Esophagus muscularis mucosa (tissue), 4 donors: ENCODE measurements at regions of chr18 and their contacts with region 1.

Region 1: GRCh38 chr18:54269893-54270844 is 852 bp downstream of the POLI start:
- DNase-seq: no peak
- H3K4me3 ChIP-seq: peak overlapping the region; percentile 72 to 83 (median 82)
- H3K27ac ChIP-seq: peak overlapping the region; percentile 87 to 91 (median 88)
- H3K4me1 ChIP-seq: peaks cover 7 to 22% (median 18%) of the 10 kb centered on the region in 4 donors
- H3K27me3 ChIP-seq: no peaks in the 10 kb centered on the region
- CTCF ChIP-seq: peak; percentile 26 to 45 (median 32)
- EP300 ChIP-seq: no peak
- POLR2A ChIP-seq: no peak

Region 2: GRCh38 chr18:54224379-54225014 is 45.7 kb before region 1 on chr18 and contains the start of gene MBD2:
- intact Hi-C with region 1: loop called (anchors 2 kb)
- DNase-seq: peak; percentile 97
- H3K4me3 ChIP-seq: peak within 1 kb of the TSS; percentile 77 to 92 (median 84)
- H3K27ac ChIP-seq: peak within 1 kb of the TSS; percentile 80 to 85 (median 83)
- H3K4me1 ChIP-seq: peaks cover 19 to 47% (median 36%) of the 10 kb centered on the region in 4 donors
- H3K27me3 ChIP-seq: no peaks in the 10 kb centered on the region
- CTCF ChIP-seq: peak in 1 of 3 experiments; percentile 16
- EP300 ChIP-seq: no peak
- POLR2A ChIP-seq: no peak
- total RNA-seq, gene MBD2: 30.7 to 43.9 (median 40.8) TPM